ENCODE measurements at regions of chr10 and their contacts with region 1.

Region 1: GRCh38 chr10:107317594-107317993 is 153.1 kb upstream of the SORCS1 start:
- DNase-seq: no peak
- ATAC-seq: no peak
- H3K4me3 ChIP-seq: no peak overlapping the region
- H3K27ac ChIP-seq: no peak overlapping the region
- H3K4me1 ChIP-seq: no peaks in the 10 kb centered on the region
- H3K27me3 ChIP-seq: no peaks in the 10 kb centered on the region
- CTCF ChIP-seq: no peak

Region 2: DNA sequence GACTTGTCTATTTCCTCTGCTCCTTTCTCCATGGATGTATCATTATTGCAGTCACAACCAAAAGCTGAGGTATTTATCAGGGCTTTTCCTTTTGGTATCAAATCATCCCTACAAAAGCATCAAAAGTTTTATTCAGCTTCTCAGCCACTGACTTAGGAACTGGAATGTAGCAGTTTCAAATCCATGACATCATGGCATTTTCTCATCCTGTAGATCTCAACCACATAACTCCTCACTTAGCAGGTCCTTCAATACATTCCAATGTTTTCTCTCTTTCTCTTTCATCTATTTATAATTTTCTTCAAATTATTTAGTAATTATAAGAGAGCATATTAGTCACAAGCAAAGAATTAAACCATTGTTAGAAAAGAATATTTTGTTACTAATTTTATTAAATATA is 384.3 kb after region 1 on chr10:
- intact Hi-C with region 1: no loop called
- DNase-seq: no peak
- ATAC-seq: no peak
- H3K4me3 ChIP-seq: no peak overlapping the region
- H3K27ac ChIP-seq: no peak overlapping the region
- H3K4me1 ChIP-seq: no peaks in the 10 kb centered on the region
- H3K27me3 ChIP-seq: no peaks in the 10 kb centered on the region
- CTCF ChIP-seq: no peak

Region 3: GRCh38 chr10:108469940-108470339 is 1152.3 kb after region 1 on chr10:
- intact Hi-C with region 1: loop called in 1 of 10 experiments (anchors 5 kb)
- DNase-seq: no peak
- ATAC-seq: no peak
- H3K4me3 ChIP-seq: no peak overlapping the region
- H3K27ac ChIP-seq: no peak overlapping the region
- H3K4me1 ChIP-seq: peaks cover 0 to 9% (median 0%) of the 10 kb centered on the region in 9 donors
- H3K27me3 ChIP-seq: peaks cover 0 to 27% (median 18%) of the 10 kb centered on the region in 7 donors
- CTCF ChIP-seq: no peak